ENCODE measurements at regions of chr1 and their contacts with region 1.

Region 1: GRCh38 chr1:29033829-29034466 is 89.8 kb downstream of the TMEM200B start:
- DNase-seq: no peak
- H3K4me3 ChIP-seq: no peak overlapping the region
- H3K27ac ChIP-seq: no peak overlapping the region
- H3K4me1 ChIP-seq: no peaks in the 10 kb centered on the region
- H3K27me3 ChIP-seq: no peaks in the 10 kb centered on the region
- CTCF ChIP-seq: peak in 4 of 6 experiments; percentile 44 to 79 (median 66)
- POLR2A ChIP-seq: no peak

Region 2: GRCh38 chr1:28449904-28450303 is 584.0 kb before region 1 on chr1:
- intact Hi-C with region 1: no loop called
- DNase-seq: no peak
- H3K4me3 ChIP-seq: no peak overlapping the region
- H3K27ac ChIP-seq: no peak overlapping the region
- H3K4me1 ChIP-seq: peaks cover 6 to 11% of the 10 kb centered on the region in 2 donors
- H3K27me3 ChIP-seq: no peaks in the 10 kb centered on the region
- CTCF ChIP-seq: no peak
- POLR2A ChIP-seq: no peak

Region 3: DNA sequence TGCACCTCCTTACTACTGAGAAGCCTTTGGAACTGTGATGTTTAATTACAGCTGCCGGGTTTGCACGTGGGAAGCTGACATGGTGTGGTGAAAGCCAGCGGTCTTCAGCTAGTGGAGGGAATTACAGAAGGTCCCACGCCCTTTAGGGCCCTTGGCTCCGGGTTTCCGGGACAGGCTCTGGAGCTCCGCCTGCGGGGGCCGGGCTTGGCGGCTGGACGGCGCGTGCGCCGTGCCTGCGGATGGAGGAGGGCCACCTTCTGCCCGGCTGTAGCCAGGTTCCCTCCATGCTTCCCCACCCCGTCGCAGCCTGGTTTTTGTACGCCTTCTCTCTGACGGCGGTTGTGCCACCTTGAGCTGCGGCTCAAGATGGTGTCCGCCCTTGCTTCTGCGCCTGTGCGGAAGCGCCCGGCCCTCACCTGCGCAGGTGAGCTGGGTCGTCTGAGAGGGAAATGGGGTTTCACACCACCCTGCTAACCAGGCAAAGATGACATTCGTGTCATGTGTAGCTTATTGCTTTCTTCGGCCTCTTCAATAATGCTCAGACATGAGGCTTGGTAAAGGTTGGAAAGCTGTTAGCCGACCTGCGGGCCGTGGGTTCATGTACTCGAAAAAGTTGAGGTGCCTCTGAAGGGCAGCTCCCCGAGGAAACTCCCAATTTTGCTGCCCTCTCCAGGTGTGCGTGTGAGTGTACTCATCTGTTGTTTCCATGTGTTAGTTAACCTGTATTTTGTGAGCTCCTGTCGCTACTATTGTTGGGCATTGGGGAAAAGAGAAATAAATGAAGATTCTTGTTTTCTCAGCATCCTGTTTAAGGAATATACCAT is 258.6 kb before region 1 on chr1:
- intact Hi-C with region 1: loop called (anchors 10 kb)
- DNase-seq: peak; percentile 82 to 85
- H3K4me3 ChIP-seq: peak overlapping the region; percentile 5 to 31 (median 18)
- H3K27ac ChIP-seq: peak overlapping the region; percentile 36 to 52 (median 42)
- H3K4me1 ChIP-seq: peaks cover 4 to 14% of the 10 kb centered on the region in 2 donors
- H3K27me3 ChIP-seq: no peaks in the 10 kb centered on the region
- CTCF ChIP-seq: no peak
- POLR2A ChIP-seq: peak in 1 of 2 donors; percentile 79

Measured in thyroid gland (tissue), 4 donors.